AG04449 (cell line): ENCODE measurements at regions of chr6 and their contacts with region 1.

Region 1: GRCh38 chr6:44630125-44631028 is 242.9 kb downstream of the CDC5L start:
- DNase-seq: no peak
- H3K4me3 ChIP-seq: no peak overlapping the region
- CTCF ChIP-seq: peak; percentile 86

Region 2: GRCh38 chr6:44642870-44643529 is 12.6 kb after region 1 on chr6:
- CTCF ChIA-PET with region 1: interaction called, 63 read pairs
- POLR2A ChIA-PET with region 1: no interaction called
- DNase-seq: no peak
- H3K4me3 ChIP-seq: no peak overlapping the region
- CTCF ChIP-seq: no peak

Region 3: GRCh38 chr6:44662461-44663121 is 32.2 kb after region 1 on chr6:
- CTCF ChIA-PET with region 1: interaction called, 14 read pairs
- POLR2A ChIA-PET with region 1: no interaction called
- DNase-seq: peak; percentile 72
- H3K4me3 ChIP-seq: no peak overlapping the region
- CTCF ChIP-seq: no peak

Region 4: DNA sequence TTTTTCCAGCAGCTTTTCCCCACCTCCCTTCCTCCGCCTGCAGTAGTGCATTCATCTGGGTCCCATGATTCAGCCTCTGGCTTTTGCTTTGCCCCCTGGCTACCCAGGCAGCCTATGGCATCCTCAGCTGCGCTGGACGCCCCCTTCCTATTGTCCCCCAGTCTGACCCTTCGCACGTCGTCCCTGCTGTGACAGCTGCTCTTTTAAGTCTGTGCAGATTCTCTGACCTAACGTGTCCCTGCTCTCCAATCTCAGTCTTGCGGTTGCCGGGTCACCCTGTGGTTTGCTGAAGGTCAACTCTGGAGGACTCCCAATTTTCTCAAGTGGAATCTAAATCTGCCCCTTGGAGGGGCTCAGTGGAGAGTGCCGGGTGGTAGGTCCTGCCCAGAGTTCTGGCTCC is 51.4 kb after region 1 on chr6:
- CTCF ChIA-PET with region 1: no interaction called
- POLR2A ChIA-PET with region 1: no interaction called
- DNase-seq: no peak
- H3K4me3 ChIP-seq: no peak overlapping the region
- CTCF ChIP-seq: no peak

Region 5: GRCh38 chr6:44892579-44892978 is 262.2 kb after region 1 on chr6:
- CTCF ChIA-PET with region 1: no interaction called
- POLR2A ChIA-PET with region 1: no interaction called
- DNase-seq: no peak
- H3K4me3 ChIP-seq: no peak overlapping the region
- CTCF ChIP-seq: no peak

Region 6: DNA sequence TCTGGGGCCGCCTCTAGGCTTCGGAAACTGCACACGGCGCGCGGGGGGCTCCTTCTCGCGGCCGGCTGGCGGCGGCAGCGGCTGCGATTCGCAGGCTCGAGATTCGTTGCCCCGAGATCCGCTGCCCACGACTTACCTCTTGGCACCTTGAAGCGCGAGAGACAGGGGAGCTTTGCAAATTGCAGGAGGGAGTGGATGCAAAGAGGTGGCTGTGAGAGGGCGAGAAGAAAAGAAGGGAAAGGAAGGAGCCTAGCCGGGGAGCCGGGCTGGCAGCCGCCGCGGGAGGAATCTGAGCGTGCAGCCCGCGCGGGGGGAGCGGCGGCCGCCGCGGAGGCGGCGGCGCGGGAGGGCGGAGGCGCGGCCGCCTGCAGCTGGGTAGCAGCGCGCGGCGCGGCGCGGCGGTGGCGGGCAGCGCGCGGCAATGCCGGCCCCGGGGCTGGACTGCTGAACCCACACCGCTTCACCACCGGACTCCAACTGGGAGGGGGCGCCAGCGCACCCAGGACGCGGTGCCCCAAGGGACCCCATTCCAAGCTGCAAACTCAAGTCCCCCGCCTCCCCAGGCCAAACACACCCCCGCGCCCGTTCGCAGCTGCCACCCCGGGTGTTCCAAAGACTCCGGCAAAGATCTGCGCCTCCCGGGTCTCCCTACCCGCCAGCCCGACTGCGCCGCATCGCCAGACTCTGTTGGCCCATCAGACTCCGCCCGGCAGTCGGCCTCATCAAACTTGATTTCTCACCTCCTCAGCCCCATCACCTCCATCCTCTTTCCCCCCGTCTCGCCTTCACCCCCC is 791.5 kb after region 1 on chr6:
- CTCF ChIA-PET with region 1: interaction called, 12 read pairs
- POLR2A ChIA-PET with region 1: no interaction called
- DNase-seq: no peak
- H3K4me3 ChIP-seq: peak overlapping the region; percentile 96
- CTCF ChIP-seq: peak; percentile 55

Region 7: GRCh38 chr6:45922728-45923351 is 1292.5 kb after region 1 on chr6:
- CTCF ChIA-PET with region 1: interaction called, 45 read pairs
- POLR2A ChIA-PET with region 1: no interaction called
- DNase-seq: peak; percentile 67
- H3K4me3 ChIP-seq: no peak overlapping the region
- CTCF ChIP-seq: peak; percentile 68